CD4-positive, alpha-beta T cell (primary cell): ENCODE measurements at regions of chr1 and their contacts with region 1.

Region 1: DNA sequence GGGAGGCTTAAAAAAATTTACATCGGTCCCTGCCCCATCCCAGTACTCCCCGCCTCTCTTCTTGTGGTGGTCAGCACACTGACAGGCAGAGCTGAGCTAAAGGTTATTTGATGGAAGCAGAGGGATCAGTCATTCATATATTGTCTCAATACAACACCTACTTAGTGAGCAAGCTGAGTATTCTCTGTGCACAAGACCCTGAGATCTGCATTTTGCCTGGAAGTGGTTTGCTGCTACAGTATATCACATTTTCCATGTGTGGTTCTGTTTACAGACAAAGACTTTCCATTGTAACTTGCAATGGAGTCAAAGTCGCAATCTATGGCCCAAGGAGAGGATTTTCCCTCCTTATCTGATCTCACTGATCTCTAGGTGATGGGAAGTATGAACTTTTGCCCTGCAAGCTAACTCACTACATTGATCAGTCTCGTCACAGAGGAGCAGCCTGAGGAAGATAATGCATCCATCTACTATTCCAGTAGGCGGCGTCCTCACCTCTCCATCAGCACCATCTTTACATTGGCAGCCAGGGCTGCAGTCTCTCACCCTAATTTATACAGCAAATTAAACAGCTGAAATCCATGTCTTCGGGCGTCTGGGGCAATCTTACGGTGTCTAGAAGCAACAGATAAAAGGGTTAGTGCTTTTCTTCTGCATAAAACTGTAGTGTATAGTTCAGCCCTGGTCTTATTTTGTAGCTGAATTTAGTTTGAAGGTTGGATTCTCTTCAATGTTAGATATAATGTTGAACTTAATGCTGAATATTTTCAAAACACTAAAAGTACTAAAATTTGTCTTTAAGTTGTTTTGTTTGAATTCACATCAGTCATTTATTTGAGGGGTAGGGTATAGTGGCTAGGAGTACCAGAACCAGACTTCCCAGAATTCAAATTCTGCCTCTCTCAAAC is 3.2 kb upstream of the TRAF5 start:
- DNase-seq: peak; percentile 46 to 86 (median 60)
- ATAC-seq: peak; percentile 71
- H3K4me3 ChIP-seq: no peak overlapping the region
- H3K4me3 Mint-ChIP-seq: peak overlapping the region; percentile 55
- H3K27ac ChIP-seq: no peak overlapping the region
- H3K27ac Mint-ChIP-seq: no peak overlapping the region
- H3K4me1 ChIP-seq: peaks cover 29% of the 10 kb centered on the region
- H3K4me1 Mint-ChIP-seq: peaks cover 47% of the 10 kb centered on the region
- H3K27me3 ChIP-seq: no peaks in the 10 kb centered on the region
- H3K27me3 Mint-ChIP-seq: no peaks in the 10 kb centered on the region
- CTCF ChIP-seq: peak; percentile 93

Region 2: GRCh38 chr1:211258756-211259637 is 64.4 kb before region 1 on chr1 and contains the start of gene RCOR3:
- CTCF ChIA-PET with region 1: no interaction called
- POLR2A ChIA-PET with region 1: interaction called, 6 read pairs
- intact Hi-C with region 1: loop called in 1 of 2 experiments (anchors 10 kb)
- DNase-seq: peak; percentile 88 to 95 (median 92)
- ATAC-seq: peak; percentile 76
- H3K4me3 ChIP-seq: peak within 1 kb of the TSS; percentile 89
- H3K4me3 Mint-ChIP-seq: peak within 1 kb of the TSS; percentile 94
- H3K27ac ChIP-seq: peak within 1 kb of the TSS; percentile 77 to 87
- H3K27ac Mint-ChIP-seq: peak within 1 kb of the TSS; percentile 94
- H3K4me1 ChIP-seq: peaks cover 16% of the 10 kb centered on the region
- H3K4me1 Mint-ChIP-seq: peaks cover 26% of the 10 kb centered on the region
- H3K27me3 ChIP-seq: no peaks in the 10 kb centered on the region
- H3K27me3 Mint-ChIP-seq: no peaks in the 10 kb centered on the region
- CTCF ChIP-seq: peak; percentile 59
- total RNA-seq, gene RCOR3: 55.7 to 60.5 TPM

Region 3: DNA sequence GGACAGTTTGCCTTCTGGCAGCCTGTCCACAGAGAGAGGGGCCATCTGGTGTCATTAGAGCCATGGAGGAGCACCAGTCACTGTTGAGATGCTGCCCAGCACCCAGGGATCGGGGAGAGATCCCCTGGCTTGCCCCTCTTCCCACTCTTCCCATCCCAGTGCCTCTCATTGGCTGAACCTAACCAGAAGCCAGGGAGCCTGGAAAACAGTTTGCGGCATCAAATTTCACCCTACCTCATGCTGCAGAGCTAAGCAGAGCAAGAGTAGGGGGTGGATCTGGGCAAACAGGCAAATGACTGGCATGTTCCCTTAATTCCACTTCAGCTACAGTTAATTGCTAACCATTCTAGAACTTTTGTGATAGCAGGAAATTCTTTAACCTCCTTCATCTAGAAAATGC is 22.3 kb after region 1 on chr1:
- CTCF ChIA-PET with region 1: interaction called, 9 read pairs
- POLR2A ChIA-PET with region 1: interaction called, 26 read pairs
- intact Hi-C with region 1: no loop called
- DNase-seq: no peak
- ATAC-seq: no peak
- H3K4me3 ChIP-seq: no peak overlapping the region
- H3K4me3 Mint-ChIP-seq: no peak overlapping the region
- H3K27ac ChIP-seq: no peak overlapping the region
- H3K27ac Mint-ChIP-seq: peak overlapping the region; percentile 28
- H3K4me1 ChIP-seq: peaks cover 67% of the 10 kb centered on the region
- H3K4me1 Mint-ChIP-seq: peaks cover 96% of the 10 kb centered on the region
- H3K27me3 ChIP-seq: no peaks in the 10 kb centered on the region
- H3K27me3 Mint-ChIP-seq: no peaks in the 10 kb centered on the region
- CTCF ChIP-seq: no peak

Region 4: DNA sequence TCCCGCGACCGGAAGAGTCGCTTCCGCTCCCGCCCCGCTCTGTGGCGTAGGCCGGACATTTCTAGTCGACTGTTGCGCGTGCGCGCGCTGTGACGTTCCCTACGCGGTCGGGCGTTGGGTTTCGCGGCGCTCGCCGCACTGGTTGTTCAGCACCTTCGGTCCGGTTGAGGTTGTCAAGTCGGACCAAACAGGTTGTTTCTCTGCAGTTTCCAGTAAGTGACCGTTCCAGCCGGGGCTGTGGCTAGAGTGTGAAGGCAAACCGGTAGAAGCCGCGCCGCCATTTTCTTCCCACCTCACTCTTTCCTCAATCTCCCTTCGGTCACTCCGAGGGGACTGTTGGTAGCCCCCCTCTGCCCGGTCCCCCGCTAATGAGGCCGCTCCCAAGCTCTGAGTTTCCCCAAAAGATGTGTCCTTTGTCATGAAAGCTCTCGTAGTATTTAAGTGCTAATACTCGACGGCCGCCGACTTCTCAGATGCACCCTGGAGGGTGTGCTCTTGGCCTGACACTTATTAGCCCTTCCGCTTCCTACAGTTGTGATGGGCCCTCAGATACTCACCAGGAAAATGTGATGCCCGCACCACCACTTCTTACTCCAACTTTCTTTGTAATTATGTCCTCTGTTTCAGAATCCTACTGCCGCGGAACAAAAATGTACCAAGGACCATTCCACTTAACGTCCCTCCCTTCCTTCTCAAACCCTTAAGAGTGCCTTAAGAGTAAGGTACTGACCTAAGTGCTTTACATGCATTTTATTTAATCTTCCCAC is 59.5 kb after region 1 on chr1:
- CTCF ChIA-PET with region 1: interaction called, 3 read pairs
- POLR2A ChIA-PET with region 1: interaction called, 16 read pairs
- intact Hi-C with region 1: loop called (anchors 2 to 10 kb)
- DNase-seq: peak; percentile 55 to 88 (median 73)
- ATAC-seq: peak; percentile 82
- H3K4me3 ChIP-seq: peak overlapping the region; percentile 92
- H3K4me3 Mint-ChIP-seq: peak overlapping the region; percentile 85
- H3K27ac ChIP-seq: peak overlapping the region; percentile 75 to 94
- H3K27ac Mint-ChIP-seq: peak overlapping the region; percentile 86
- H3K4me1 ChIP-seq: peaks cover 8% of the 10 kb centered on the region
- H3K4me1 Mint-ChIP-seq: peaks cover 35% of the 10 kb centered on the region
- H3K27me3 ChIP-seq: no peaks in the 10 kb centered on the region
- H3K27me3 Mint-ChIP-seq: no peaks in the 10 kb centered on the region
- CTCF ChIP-seq: no peak

Region 5: DNA sequence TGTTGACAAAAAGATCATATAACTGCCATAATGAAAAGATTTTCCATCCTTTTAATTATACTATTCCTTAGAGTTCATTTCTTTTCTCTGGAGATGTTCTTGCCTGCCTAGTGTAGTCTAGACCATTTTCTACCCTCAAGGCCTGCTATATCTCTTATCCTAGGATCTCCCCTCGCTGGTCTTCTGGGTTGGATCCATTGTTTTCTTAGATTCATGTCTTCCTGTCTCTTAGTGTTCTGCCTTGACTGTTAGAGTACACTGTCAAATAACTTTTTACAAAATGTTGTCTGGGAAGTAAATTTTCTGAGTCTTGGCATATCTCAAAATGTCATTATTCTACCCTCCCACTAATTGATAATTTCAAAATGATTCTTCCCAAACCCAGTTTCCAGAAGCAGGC is 69.8 kb after region 1 on chr1:
- CTCF ChIA-PET with region 1: no interaction called
- POLR2A ChIA-PET with region 1: no interaction called
- intact Hi-C with region 1: no loop called
- DNase-seq: no peak
- ATAC-seq: no peak
- H3K4me3 ChIP-seq: no peak overlapping the region
- H3K4me3 Mint-ChIP-seq: no peak overlapping the region
- H3K27ac ChIP-seq: no peak overlapping the region
- H3K27ac Mint-ChIP-seq: no peak overlapping the region
- H3K4me1 ChIP-seq: no peaks in the 10 kb centered on the region
- H3K4me1 Mint-ChIP-seq: no peaks in the 10 kb centered on the region
- H3K27me3 ChIP-seq: no peaks in the 10 kb centered on the region
- H3K27me3 Mint-ChIP-seq: no peaks in the 10 kb centered on the region
- CTCF ChIP-seq: no peak

Region 6: GRCh38 chr1:211514030-211514754 is 190.8 kb after region 1 on chr1:
- CTCF ChIA-PET with region 1: interaction called, 6 read pairs
- POLR2A ChIA-PET with region 1: no interaction called
- intact Hi-C with region 1: loop called (anchors 2 kb)
- DNase-seq: peak; percentile 47 to 81 (median 61)
- ATAC-seq: peak; percentile 60
- H3K4me3 ChIP-seq: no peak overlapping the region
- H3K4me3 Mint-ChIP-seq: peak overlapping the region; percentile 82
- H3K27ac ChIP-seq: no peak overlapping the region
- H3K27ac Mint-ChIP-seq: no peak overlapping the region
- H3K4me1 ChIP-seq: peaks cover 20% of the 10 kb centered on the region
- H3K4me1 Mint-ChIP-seq: peaks cover 22% of the 10 kb centered on the region
- H3K27me3 ChIP-seq: no peaks in the 10 kb centered on the region
- H3K27me3 Mint-ChIP-seq: no peaks in the 10 kb centered on the region
- CTCF ChIP-seq: peak; percentile 69

Region 7: DNA sequence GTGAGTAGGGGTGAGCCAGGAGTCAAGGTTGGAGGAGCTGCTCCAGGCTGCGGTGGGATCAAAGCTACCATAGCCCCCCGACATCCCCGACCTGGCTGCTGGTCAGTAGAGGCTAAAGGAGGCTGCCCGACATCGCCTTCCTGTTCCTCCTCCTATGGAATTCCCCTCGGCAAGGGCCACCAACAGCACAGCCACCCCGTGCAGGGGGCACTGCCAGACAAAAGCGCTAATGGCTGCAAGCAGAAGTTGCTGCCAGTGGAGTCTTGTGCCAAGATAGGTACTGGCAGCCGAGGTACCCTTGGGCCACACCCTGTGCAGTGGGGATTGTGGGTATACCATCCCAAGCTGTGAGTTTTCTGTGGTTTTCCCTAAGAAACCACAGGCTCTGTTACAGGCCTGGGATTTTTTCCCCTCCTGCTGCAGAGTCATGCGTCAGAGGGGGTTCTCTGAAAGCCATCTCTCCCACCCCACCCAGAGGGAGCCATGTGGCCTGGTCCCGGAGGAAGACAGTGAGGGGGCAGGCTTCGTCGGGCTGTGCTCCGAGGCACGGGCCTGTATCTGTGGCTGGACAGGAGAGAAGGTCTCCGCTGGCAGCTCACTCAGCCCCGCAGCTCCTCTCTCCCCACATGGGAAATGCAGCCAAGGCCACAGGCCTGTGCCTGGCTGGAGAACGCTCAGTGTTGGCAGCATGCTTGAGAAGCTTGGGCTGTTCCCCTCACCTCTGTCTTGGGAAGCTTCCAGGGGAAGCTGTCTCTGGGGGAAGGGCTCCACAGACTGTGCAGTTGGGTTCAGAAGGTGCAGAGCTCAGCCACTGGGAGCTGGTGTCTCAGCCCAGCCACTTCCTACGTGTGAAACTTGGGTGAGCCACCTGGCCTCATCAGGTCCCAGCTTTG is 309.5 kb after region 1 on chr1:
- CTCF ChIA-PET with region 1: no interaction called
- POLR2A ChIA-PET with region 1: no interaction called
- intact Hi-C with region 1: no loop called
- DNase-seq: peak in 1 of 14 experiments; percentile 26
- ATAC-seq: no peak
- H3K4me3 ChIP-seq: no peak overlapping the region
- H3K4me3 Mint-ChIP-seq: no peak overlapping the region
- H3K27ac ChIP-seq: no peak overlapping the region
- H3K27ac Mint-ChIP-seq: no peak overlapping the region
- H3K4me1 ChIP-seq: peaks cover 5% of the 10 kb centered on the region
- H3K4me1 Mint-ChIP-seq: no peaks in the 10 kb centered on the region
- H3K27me3 ChIP-seq: no peaks in the 10 kb centered on the region
- H3K27me3 Mint-ChIP-seq: no peaks in the 10 kb centered on the region
- CTCF ChIP-seq: no peak